Activated CD4-positive, alpha-beta memory T cell treated with anti-CD3 and anti-CD28 coated beads for 36 hours (primary cell): ENCODE measurements at regions of chr17 and their contacts with region 1.

Region 1: GRCh38 chr17:5065227-5065744 is 13.0 kb upstream of the ZFP3 start:
- DNase-seq: no peak
- H3K4me3 Mint-ChIP-seq: no peak overlapping the region
- H3K27ac Mint-ChIP-seq: no peak overlapping the region
- H3K4me1 Mint-ChIP-seq: peaks cover 9% of the 10 kb centered on the region
- H3K27me3 Mint-ChIP-seq: no peaks in the 10 kb centered on the region

Region 2: DNA sequence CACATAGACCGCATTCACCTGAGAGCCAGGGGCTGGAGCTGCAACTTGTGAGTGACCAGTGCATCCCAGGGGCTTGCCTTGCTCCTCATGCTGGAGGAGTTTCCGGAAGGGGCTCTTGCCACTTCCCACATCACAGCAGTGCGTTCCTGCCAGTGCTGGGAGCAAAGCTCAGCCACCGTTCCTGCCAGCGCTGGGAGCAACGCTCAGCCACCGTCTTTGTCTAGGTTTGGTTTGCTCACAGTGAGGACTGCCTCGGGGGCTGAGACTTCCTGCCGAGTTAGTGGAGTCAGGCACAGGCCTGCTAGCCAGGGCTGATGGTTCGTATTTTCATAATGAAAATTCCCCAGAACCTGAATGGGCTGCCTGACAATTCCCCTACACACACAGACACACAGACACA is 157.0 kb before region 1 on chr17:
- CTCF ChIA-PET with region 1: interaction called, 16 read pairs
- POLR2A ChIA-PET with region 1: no interaction called
- intact Hi-C with region 1: loop called (anchors 1 kb)
- DNase-seq: peak; percentile 34
- H3K4me3 Mint-ChIP-seq: no peak overlapping the region
- H3K27ac Mint-ChIP-seq: no peak overlapping the region
- H3K4me1 Mint-ChIP-seq: peaks cover 4% of the 10 kb centered on the region
- H3K27me3 Mint-ChIP-seq: no peaks in the 10 kb centered on the region

Region 3: DNA sequence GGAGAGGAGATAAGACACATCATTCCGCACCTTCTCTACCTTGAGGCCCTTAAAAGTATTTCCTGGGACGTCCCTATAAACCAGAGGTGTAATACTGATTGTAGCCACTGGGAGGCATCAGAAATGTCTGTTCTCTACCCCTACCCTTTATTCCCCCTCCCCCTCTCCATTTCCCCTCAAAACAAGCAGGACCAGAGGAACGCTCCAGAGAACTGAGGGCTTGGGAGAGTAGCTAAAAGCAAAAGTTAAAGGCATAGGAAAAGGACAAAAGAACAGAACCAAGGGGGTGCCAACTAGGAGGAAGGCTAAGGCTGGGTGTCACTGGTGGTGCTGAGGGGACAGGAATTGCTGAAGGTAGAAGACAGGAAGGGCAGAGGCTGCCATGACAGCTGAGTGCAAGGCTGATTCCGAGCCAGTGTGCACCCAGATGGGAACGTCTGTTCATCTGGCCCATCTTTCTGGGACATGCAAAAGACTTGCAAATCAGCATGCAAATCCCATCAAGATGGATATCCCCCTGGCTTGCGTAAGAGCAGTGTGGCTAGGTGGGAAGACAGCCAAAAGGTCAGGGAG is 84.6 kb before region 1 on chr17:
- CTCF ChIA-PET with region 1: interaction called, 57 read pairs
- POLR2A ChIA-PET with region 1: no interaction called
- intact Hi-C with region 1: loop called (anchors 1 kb)
- DNase-seq: peak; percentile 40
- H3K4me3 Mint-ChIP-seq: no peak overlapping the region
- H3K27ac Mint-ChIP-seq: peak overlapping the region; percentile 34
- H3K4me1 Mint-ChIP-seq: peaks cover 23% of the 10 kb centered on the region
- H3K27me3 Mint-ChIP-seq: no peaks in the 10 kb centered on the region

Region 4: GRCh38 chr17:5049314-5049895 is 15.9 kb before region 1 on chr17:
- CTCF ChIA-PET with region 1: interaction called, 22 read pairs
- POLR2A ChIA-PET with region 1: no interaction called
- intact Hi-C with region 1: no loop called
- DNase-seq: peak; percentile 76
- H3K4me3 Mint-ChIP-seq: no peak overlapping the region
- H3K27ac Mint-ChIP-seq: peak overlapping the region; percentile 78
- H3K4me1 Mint-ChIP-seq: peaks cover 41% of the 10 kb centered on the region
- H3K27me3 Mint-ChIP-seq: no peaks in the 10 kb centered on the region